Ascending aorta (tissue), 2 donors: ENCODE measurements at regions of chr13 and their contacts with region 1.

Region 1: DNA sequence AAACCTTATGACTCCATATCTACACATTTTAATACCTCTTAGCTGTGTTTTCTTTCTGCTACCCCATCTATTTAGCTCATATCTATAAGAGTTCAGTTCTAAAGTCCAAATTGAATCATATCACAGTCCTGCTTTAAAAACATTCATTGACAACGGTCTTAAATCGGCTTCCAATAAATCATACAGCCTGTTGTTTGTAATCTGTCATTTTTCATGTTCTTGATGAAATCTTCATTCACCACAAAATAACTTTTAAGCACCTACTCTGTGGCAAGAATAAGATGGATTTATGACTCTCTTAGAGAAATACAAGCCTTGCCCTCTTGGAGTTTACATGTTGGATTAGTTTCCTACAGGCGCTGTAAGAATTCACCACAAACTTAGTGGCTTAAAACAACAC is 450.9 kb upstream of the GPC6 start:
- DNase-seq: no peak
- H3K4me3 ChIP-seq: no peak overlapping the region
- H3K27ac ChIP-seq: no peak overlapping the region
- H3K4me1 ChIP-seq: no peaks in the 10 kb centered on the region
- H3K27me3 ChIP-seq: no peaks in the 10 kb centered on the region
- CTCF ChIP-seq: no peak

Region 2: GRCh38 chr13:92806215-92806614 is 30.6 kb after region 1 on chr13:
- intact Hi-C with region 1: no loop called
- DNase-seq: no peak
- H3K4me3 ChIP-seq: peak overlapping the region; percentile 41 to 48
- H3K27ac ChIP-seq: peak overlapping the region; percentile 28 to 53
- H3K4me1 ChIP-seq: peaks cover 3 to 20% of the 10 kb centered on the region in 2 donors
- H3K27me3 ChIP-seq: no peaks in the 10 kb centered on the region
- CTCF ChIP-seq: no peak

Region 3: DNA sequence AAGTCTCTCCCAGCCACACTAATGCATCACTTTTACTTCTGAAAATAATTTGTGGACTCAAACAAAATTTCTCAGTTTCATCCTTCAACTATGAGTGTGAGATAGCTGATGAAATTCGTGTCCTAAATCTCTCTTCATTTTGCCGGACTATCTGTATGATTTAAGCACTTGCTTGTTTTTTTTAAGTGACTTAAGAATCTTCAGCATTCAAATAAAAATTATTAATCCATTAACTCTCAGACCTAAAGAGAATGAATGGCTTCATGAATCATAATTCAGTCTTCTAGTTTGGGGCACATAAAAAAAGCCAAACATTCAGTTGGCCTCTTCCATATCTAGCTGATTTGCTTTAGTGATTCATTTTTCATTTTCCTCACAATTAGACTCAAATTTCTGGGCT is 1124.3 kb after region 1 on chr13:
- intact Hi-C with region 1: loop called (anchors 5 kb)
- DNase-seq: no peak
- H3K4me3 ChIP-seq: no peak overlapping the region
- H3K27ac ChIP-seq: no peak overlapping the region
- H3K4me1 ChIP-seq: no peaks in the 10 kb centered on the region
- H3K27me3 ChIP-seq: no peaks in the 10 kb centered on the region
- CTCF ChIP-seq: no peak